Heart right ventricle (tissue), 16 donors: ENCODE measurements at regions of chr12 and their contacts with region 1.

Region 1: GRCh38 chr12:92561543-92561899 is 141.3 kb upstream of the PLEKHG7 start:
- DNase-seq: peak in 1 of 2 donors; percentile 74
- ATAC-seq: peak; percentile 76 to 96 (median 89)
- H3K4me3 ChIP-seq: no peak overlapping the region
- H3K27ac ChIP-seq: peak overlapping the region in 9 of 10 donors; percentile 29 to 68 (median 45)
- H3K4me1 ChIP-seq: peaks cover 0 to 44% (median 24%) of the 10 kb centered on the region in 9 donors
- H3K27me3 ChIP-seq: no peaks in the 10 kb centered on the region
- CTCF ChIP-seq: no peak

Region 2: GRCh38 chr12:92002673-92003382 is 558.7 kb before region 1 on chr12:
- intact Hi-C with region 1: loop called in 1 of 10 experiments (anchors 10 kb)
- DNase-seq: no peak
- ATAC-seq: peak in 5 of 8 donors; percentile 59 to 86 (median 77)
- H3K4me3 ChIP-seq: no peak overlapping the region
- H3K27ac ChIP-seq: peak overlapping the region in 7 of 10 donors; percentile 10 to 64 (median 50)
- H3K4me1 ChIP-seq: peaks cover 0 to 23% (median 16%) of the 10 kb centered on the region in 9 donors
- H3K27me3 ChIP-seq: no peaks in the 10 kb centered on the region
- CTCF ChIP-seq: no peak

Region 3: GRCh38 chr12:92304371-92305055 is 257.0 kb before region 1 on chr12:
- intact Hi-C with region 1: loop called in 2 of 10 experiments (anchors 10 kb)
- DNase-seq: peak in 1 of 2 donors; percentile 31
- ATAC-seq: peak; percentile 47 to 95 (median 84)
- H3K4me3 ChIP-seq: no peak overlapping the region
- H3K27ac ChIP-seq: peak overlapping the region in 8 of 10 donors; percentile 28 to 78 (median 52)
- H3K4me1 ChIP-seq: peaks cover 0 to 35% (median 23%) of the 10 kb centered on the region in 9 donors
- H3K27me3 ChIP-seq: no peaks in the 10 kb centered on the region
- CTCF ChIP-seq: no peak

Region 4: DNA sequence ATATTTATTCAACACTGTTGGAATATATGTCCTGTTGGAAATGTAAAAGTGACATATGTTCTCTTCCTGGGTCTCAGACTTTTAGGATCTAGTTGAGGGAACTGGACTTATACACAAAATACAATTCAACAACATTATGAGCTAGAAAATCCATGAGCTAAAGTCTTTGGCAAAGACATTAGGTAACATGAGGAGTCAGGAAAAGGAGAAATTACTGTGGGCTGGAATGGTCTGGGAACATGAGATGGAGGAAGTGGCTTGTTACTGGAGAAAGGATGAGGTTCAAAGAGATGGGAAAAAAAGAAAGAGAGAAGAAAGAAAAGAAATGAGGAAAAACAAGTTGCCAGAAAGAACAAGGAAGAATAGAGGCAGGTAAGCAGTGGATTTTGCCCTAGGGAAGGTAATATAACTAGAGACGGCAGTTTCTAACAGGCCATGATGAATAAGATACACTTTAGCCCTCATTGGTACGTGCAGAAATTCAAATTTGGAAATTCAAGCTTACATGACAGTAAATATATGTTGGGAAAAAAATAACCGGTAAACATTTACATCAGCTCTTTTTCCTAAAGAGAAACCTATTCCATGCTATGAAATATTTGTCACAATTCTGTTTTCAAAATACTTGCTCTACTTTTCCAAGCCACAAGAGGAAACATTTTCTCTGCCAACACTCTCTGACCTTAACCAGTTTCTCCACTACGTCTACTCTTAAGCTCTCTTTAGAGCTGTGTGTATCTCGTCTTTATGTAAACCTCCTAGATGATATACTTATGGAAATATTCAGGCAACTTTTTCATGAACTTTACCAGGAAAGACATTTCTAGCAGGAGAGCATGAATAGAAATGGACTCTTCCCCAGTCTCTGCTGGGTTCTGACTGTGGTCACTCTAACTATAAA is 147.1 kb before region 1 on chr12:
- intact Hi-C with region 1: loop called in 4 of 10 experiments (anchors 10 kb)
- DNase-seq: no peak
- ATAC-seq: peak in 1 of 8 donors; percentile 14
- H3K4me3 ChIP-seq: no peak overlapping the region
- H3K27ac ChIP-seq: peak overlapping the region in 1 of 10 donors; percentile 29
- H3K4me1 ChIP-seq: peaks cover 0 to 42% (median 24%) of the 10 kb centered on the region in 9 donors
- H3K27me3 ChIP-seq: no peaks in the 10 kb centered on the region
- CTCF ChIP-seq: peak in 2 of 9 donors; percentile 8 to 10

Region 5: GRCh38 chr12:92445253-92446082 is 116.1 kb before region 1 on chr12:
- intact Hi-C with region 1: loop called in 1 of 10 experiments (anchors 10 kb)
- DNase-seq: peak in 1 of 2 donors; percentile 63
- ATAC-seq: peak; percentile 73 to 95 (median 90)
- H3K4me3 ChIP-seq: no peak overlapping the region
- H3K27ac ChIP-seq: peak overlapping the region; percentile 18 to 85 (median 70)
- H3K4me1 ChIP-seq: peaks cover 2 to 45% (median 32%) of the 10 kb centered on the region in 9 donors
- H3K27me3 ChIP-seq: no peaks in the 10 kb centered on the region
- CTCF ChIP-seq: no peak

Region 6: GRCh38 chr12:92516277-92516600 is 45.3 kb before region 1 on chr12:
- intact Hi-C with region 1: no loop called
- DNase-seq: no peak
- ATAC-seq: no peak
- H3K4me3 ChIP-seq: no peak overlapping the region
- H3K27ac ChIP-seq: no peak overlapping the region
- H3K4me1 ChIP-seq: peaks cover 0 to 24% (median 0%) of the 10 kb centered on the region in 9 donors
- H3K27me3 ChIP-seq: no peaks in the 10 kb centered on the region
- CTCF ChIP-seq: no peak